CD8-positive, alpha-beta memory T cell (primary cell): ENCODE measurements at regions of chr1 and their contacts with region 1.

Region 1: DNA sequence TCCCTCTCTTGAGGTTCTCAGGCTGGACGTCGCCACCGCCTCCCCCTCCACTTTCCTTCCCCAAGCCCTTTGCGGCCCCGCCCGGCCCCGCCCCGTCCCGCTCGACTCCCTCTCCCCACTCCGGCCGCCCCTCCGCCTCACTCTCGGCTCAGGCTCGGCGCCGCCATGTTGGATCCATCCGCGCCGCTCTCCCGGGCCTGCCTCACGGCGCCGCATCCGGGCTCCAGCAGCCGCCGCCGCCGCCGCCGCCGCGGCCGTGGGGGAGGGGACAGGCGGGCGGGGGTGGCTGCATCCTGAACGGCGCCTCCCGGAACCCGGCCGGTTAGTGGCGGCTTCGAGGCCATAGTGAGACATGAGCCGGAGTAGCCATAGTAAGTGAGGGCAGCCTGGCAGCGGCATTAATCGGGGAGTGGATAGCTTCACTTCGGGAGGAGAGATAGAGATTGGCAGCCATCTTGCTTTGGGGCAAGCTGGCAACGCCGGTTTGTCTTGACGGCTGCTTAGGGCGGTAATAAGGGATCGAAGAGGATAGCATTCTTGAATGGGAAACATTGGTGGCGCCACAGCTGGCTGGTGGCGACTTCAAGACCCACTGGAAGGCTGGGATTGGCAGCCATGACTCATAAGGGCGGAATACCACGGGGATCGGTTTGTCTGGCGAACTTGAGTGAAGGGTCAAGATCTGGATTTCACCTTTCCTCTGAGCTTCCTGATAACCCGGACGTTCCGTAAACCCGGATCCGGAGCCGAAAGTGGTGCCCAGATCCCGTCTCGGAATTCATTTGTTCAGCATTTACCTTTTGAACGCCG is at the start of gene DEDD:
- DNase-seq: peak; percentile 84 to 95 (median 91)
- H3K4me3 ChIP-seq: peak within 1 kb of the TSS; percentile 98
- H3K4me3 Mint-ChIP-seq: no peak within 1 kb of the TSS
- H3K27ac ChIP-seq: peak within 1 kb of the TSS; percentile 84
- H3K27ac Mint-ChIP-seq: peak within 1 kb of the TSS in 4 of 8 donors; percentile 91 to 98 (median 96)
- H3K4me1 ChIP-seq: peaks cover 35% of the 10 kb centered on the region
- H3K4me1 Mint-ChIP-seq: peaks cover 33 to 46% (median 44%) of the 10 kb centered on the region in 3 donors
- H3K27me3 ChIP-seq: no peaks in the 10 kb centered on the region
- H3K27me3 Mint-ChIP-seq: no peaks in the 10 kb centered on the region
- total RNA-seq, gene DEDD: 41.0 to 41.9 TPM

Region 2: GRCh38 chr1:161117759-161118581 is 14.6 kb before region 1 on chr1 and contains the starts of genes NIT1 and PFDN2:
- CTCF ChIA-PET with region 1: interaction called, 4 read pairs
- POLR2A ChIA-PET with region 1: interaction called, 11 read pairs
- DNase-seq: peak; percentile 76 to 89 (median 83)
- H3K4me3 ChIP-seq: peak within 1 kb of the TSS; percentile 98
- H3K4me3 Mint-ChIP-seq: peak within 1 kb of the TSS; percentile 92 to 98 (median 94)
- H3K27ac ChIP-seq: peak within 1 kb of the TSS; percentile 98
- H3K27ac Mint-ChIP-seq: peak within 1 kb of the TSS; percentile 91 to 98 (median 96)
- H3K4me1 ChIP-seq: peaks cover 53% of the 10 kb centered on the region
- H3K4me1 Mint-ChIP-seq: peaks cover 57 to 72% (median 62%) of the 10 kb centered on the region in 3 donors
- H3K27me3 ChIP-seq: no peaks in the 10 kb centered on the region
- H3K27me3 Mint-ChIP-seq: no peaks in the 10 kb centered on the region
- total RNA-seq, gene NIT1: 33.9 to 36.3 TPM
- total RNA-seq, gene PFDN2: 133 to 142 TPM

Region 3: DNA sequence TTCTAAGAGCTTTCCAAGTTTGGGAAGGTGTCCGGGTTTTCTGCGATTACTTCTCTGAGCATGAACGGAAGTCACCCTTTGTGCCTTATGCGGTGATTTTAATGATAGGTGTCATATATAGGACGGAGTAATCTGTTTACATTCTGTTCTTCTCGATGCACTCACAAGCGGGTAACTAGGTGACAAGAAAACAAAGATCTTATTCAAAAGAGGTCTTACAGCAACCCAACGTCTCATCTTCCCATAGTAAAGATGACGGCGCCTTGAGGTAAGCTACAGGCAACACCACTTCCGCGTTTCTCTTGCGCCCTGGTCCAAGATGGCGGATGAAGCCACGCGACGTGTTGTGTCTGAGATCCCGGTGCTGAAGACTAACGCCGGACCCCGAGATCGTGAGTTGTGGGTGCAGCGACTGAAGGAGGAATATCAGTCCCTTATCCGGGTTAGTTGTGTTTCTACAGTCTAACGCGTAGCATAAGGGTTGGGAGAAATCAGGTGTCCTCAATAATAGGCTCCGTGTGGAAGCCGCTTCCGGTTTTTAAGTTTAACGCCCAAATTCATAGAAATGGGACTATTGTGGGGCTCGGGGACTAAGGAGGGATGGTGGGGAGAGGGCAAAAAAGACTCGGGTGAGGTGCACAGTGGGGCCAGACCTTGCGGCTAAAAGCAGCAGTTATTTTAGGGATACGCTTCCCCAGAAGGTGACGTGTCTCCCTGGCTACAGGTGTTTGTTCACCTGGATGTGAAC is 21.2 kb after region 1 on chr1 and contains the start of gene UFC1:
- CTCF ChIA-PET with region 1: interaction called, 4 read pairs
- POLR2A ChIA-PET with region 1: interaction called, 17 read pairs
- DNase-seq: peak; percentile 68 to 90 (median 88)
- H3K4me3 ChIP-seq: peak within 1 kb of the TSS; percentile 87
- H3K4me3 Mint-ChIP-seq: peak within 1 kb of the TSS; percentile 98 to 100 (median 98)
- H3K27ac ChIP-seq: peak within 1 kb of the TSS; percentile 98
- H3K27ac Mint-ChIP-seq: peak within 1 kb of the TSS; percentile 98 to 100 (median 100)
- H3K4me1 ChIP-seq: peaks cover 14% of the 10 kb centered on the region
- H3K4me1 Mint-ChIP-seq: peaks cover 25 to 45% (median 34%) of the 10 kb centered on the region in 3 donors
- H3K27me3 ChIP-seq: no peaks in the 10 kb centered on the region
- H3K27me3 Mint-ChIP-seq: no peaks in the 10 kb centered on the region
- total RNA-seq, gene UFC1: 109 to 118 TPM